Activated naive CD4-positive, alpha-beta T cell treated with anti-CD3 and anti-CD28 coated beads for 36 hours (primary cell): ENCODE measurements at regions of chr3 and their contacts with region 1.

Region 1: GRCh38 chr3:171809821-171810628 is at the start of gene PLD1:
- DNase-seq: peak; percentile 65
- H3K4me3 Mint-ChIP-seq: peak within 1 kb of the TSS; percentile 76
- H3K27ac Mint-ChIP-seq: no peak within 1 kb of the TSS
- H3K4me1 Mint-ChIP-seq: peaks cover 14% of the 10 kb centered on the region
- H3K27me3 Mint-ChIP-seq: peaks cover 37% of the 10 kb centered on the region
- total RNA-seq, gene PLD1: 0.25 TPM in 1 of 2 experiments, not detected in the other

Region 2: DNA sequence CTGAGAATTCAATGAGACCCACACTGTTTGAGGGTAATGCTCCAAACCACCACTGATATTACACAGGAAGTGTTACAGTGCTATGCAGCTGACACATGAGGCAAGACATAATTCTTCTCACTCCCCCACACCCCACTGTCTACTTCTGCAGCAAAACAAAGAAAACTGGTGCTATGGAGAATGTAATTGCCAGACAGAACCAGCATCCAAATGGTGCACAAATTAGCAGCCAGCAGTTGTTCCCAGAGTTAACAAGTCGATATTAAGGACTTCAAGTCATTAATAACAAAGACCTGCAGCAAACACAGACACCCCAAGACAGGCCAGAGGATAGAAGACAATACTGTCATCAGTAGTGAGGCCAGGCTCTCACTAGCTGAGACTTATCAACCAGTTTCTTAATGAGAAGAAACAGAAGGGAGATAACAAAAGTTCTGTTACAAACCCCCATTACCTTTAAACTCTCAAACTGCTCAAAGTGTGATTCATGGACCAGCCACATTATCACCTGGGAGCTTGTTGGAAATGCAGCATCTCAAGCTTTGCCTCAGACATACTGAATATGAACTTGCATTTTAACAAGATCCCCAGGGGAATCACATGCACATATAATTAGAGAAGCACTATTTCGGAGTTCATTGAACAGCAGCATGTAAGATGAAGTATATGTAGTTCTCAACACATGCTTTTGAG is 170.7 kb after region 1 on chr3:
- CTCF ChIA-PET with region 1: no interaction called
- intact Hi-C with region 1: no loop called
- DNase-seq: no peak
- H3K4me3 Mint-ChIP-seq: no peak overlapping the region
- H3K27ac Mint-ChIP-seq: no peak overlapping the region
- H3K4me1 Mint-ChIP-seq: peaks cover 5% of the 10 kb centered on the region
- H3K27me3 Mint-ChIP-seq: no peaks in the 10 kb centered on the region

Region 3: DNA sequence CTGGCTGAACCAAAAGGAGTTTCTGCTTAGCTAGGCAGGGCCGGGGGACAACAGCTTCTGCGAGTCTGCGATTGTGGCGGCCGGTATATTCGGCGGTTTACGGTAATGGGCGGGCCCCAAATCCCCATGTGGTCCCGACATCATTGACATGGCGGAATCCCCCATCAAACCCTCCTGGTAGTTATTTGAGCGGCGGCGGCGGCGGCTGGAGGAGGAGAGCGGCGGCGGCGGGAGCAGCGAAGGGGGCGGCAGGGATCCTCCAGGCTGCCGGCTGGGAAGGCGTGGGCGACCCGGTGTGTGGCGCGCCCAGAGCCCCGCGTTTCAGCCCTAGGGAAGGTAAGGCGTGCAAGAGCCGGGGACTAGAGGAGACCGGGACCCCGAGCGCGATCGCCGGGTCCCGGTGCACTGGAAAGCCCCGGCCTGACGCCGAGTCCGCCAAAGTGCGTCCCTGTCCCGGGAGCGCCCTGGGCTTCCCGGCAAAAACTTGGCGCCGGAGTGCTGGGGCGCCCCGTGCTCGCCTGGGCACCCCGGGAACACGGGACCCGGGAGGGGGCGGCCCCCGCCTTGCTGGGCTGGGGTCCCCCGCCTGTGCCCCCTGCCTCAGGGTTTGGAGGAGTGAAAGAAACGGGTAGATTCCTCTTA is 229.5 kb after region 1 on chr3 and contains the start of gene FNDC3B:
- CTCF ChIA-PET with region 1: interaction called, 3 read pairs
- intact Hi-C with region 1: loop called (anchors 5 kb)
- DNase-seq: peak; percentile 96
- H3K4me3 Mint-ChIP-seq: peak within 1 kb of the TSS; percentile 91
- H3K27ac Mint-ChIP-seq: peak within 1 kb of the TSS; percentile 89
- H3K4me1 Mint-ChIP-seq: peaks cover 21% of the 10 kb centered on the region
- H3K27me3 Mint-ChIP-seq: no peaks in the 10 kb centered on the region
- total RNA-seq, gene FNDC3B: 9.2 to 13.5 TPM